GM13977 (cell line): ENCODE measurements at regions of chr2 and their contacts with region 1.

Region 1: DNA sequence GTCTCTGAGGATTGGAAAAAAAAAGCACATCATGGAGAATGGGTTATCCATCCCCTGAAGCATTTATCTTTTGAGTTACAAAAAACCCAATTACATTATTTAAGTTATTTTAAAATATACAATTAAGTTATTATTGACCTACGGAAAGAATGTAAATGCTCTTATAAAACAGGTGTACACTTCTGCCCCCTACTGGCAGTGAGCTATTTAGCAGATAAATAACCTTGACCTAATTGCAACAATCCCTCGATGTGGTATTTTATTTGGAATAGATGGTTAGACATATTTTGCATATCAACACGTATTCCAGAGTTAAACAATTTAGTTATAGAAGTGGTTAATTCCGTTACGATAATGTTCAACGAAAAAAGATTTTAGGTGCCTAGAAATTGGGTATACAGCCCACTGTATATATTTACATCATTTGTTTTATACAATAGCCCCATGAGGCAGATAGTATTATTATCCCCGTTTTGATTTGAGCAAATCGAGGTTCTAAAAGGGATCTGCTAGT is 9.1 kb upstream of the DAW1 start:
- DNase-seq: peak; percentile 64
- CTCF ChIP-seq: peak; percentile 76

Region 2: GRCh38 chr2:227655454-227655853 is 206.8 kb before region 1 on chr2:
- in situ Hi-C with region 1: loop called (anchors 25 kb)
- DNase-seq: no peak
- CTCF ChIP-seq: no peak